Activated CD8-positive, alpha-beta T cell treated with anti-CD3 and anti-CD28 coated beads for 36 hours (primary cell): ENCODE measurements at regions of chr2 and their contacts with region 1.

Region 1: GRCh38 chr2:241096979-241097378 is 5.1 kb downstream of the MTERF4 start:
- DNase-seq: no peak
- ATAC-seq: peak; percentile 31
- H3K4me3 Mint-ChIP-seq: no peak overlapping the region
- H3K27ac Mint-ChIP-seq: peak overlapping the region; percentile 90
- H3K4me1 Mint-ChIP-seq: peaks cover 63% of the 10 kb centered on the region
- H3K27me3 Mint-ChIP-seq: no peaks in the 10 kb centered on the region
- CTCF ChIP-seq: no peak

Region 2: DNA sequence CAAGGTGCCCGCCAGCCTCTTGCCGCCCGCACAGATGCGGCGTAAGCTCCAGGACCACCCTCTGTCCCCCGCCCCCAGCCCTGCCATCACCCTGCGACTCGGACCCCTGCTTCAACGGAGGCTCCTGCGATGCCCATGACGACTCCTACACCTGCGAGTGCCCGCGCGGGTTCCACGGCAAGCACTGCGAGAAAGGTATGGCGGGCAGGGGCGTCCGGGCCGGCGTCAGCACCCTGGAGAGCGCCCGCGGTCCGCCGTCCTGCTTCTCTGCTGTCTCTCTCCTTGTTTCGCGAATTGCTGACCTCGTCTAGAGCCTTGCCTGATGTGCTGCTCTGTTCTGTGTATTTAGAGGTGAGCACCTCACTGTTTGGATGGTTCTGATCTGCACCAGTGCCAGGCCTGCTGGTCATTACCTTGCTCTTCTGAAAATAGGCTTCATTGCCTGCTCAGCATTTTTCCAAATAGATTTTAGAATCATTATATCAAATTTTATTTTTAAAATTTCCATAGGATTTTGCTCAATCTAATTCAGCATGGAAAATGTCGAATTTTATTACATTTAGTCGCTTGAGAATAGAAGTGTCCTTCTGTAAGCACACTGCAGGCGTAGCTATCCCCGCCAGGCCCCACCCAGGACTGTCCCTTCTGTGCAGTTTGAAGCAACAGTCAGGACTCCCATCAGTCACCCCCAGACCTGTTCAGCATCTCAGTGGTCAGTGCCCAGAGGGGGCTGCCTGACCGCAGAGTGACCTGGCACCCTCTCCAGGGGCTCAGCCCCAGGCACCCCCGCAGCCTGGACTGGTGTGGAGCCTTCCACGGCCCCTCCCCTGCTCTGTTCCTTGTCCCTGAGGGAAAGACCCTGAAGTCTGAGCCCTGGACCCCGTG is 47.0 kb before region 1 on chr2:
- CTCF ChIA-PET with region 1: no interaction called
- POLR2A ChIA-PET with region 1: no interaction called
- intact Hi-C with region 1: no loop called
- DNase-seq: no peak
- ATAC-seq: no peak
- H3K4me3 Mint-ChIP-seq: no peak overlapping the region
- H3K27ac Mint-ChIP-seq: no peak overlapping the region
- H3K4me1 Mint-ChIP-seq: no peaks in the 10 kb centered on the region
- H3K27me3 Mint-ChIP-seq: no peaks in the 10 kb centered on the region
- CTCF ChIP-seq: no peak

Region 3: GRCh38 chr2:241110607-241111439 is 13.8 kb after region 1 on chr2:
- CTCF ChIA-PET with region 1: interaction called, 3 read pairs
- POLR2A ChIA-PET with region 1: interaction called, 38 read pairs
- intact Hi-C with region 1: no loop called
- DNase-seq: peak; percentile 42
- ATAC-seq: peak; percentile 50
- H3K4me3 Mint-ChIP-seq: peak overlapping the region; percentile 81
- H3K27ac Mint-ChIP-seq: peak overlapping the region; percentile 93
- H3K4me1 Mint-ChIP-seq: peaks cover 50% of the 10 kb centered on the region
- H3K27me3 Mint-ChIP-seq: no peaks in the 10 kb centered on the region
- CTCF ChIP-seq: no peak